Motor neuron (in vitro differentiated cells): ENCODE measurements at regions of chr12 and their contacts with region 1.

Region 1: GRCh38 chr12:49366652-49367380 is 446 bp upstream of the SPATS2 start:
- ATAC-seq: peak; percentile 79 to 93 (median 90)
- H3K4me3 ChIP-seq: peak overlapping the region; percentile 78 to 99 (median 86)
- H3K27ac ChIP-seq: peak overlapping the region; percentile 86 to 90
- H3K4me1 ChIP-seq: peaks cover 0 to 11% of the 10 kb centered on the region in 2 donors

Region 2: DNA sequence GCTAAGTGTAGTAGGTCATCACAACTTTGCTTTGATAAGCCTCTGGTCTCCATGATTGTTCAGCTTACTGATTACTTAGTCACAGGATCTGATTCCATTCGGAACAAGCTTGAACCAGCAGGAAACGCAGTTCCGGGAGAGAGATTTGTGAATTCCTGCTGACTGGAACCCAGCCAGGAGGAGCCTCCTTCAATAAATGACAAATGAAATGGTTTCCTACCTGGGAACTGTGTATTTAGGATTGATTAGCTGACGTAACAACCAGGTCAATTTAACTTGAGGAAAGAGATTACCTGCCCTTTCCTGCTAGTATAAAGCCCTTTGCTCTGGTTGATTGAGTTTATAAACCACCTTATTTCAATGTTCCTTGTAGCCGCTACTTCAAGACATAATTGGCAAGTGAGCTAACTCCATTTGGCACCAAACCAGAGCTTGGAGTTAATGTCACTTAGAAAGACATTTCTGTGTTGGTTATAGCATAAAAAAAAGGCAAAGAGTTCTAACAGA is 136.9 kb after region 1 on chr12:
- in situ Hi-C with region 1: loop called in 5 of 9 experiments (anchors 10 to 25 kb)
- ATAC-seq: no peak
- H3K4me3 ChIP-seq: no peak overlapping the region
- H3K27ac ChIP-seq: no peak overlapping the region
- H3K4me1 ChIP-seq: no peaks in the 10 kb centered on the region

Region 3: DNA sequence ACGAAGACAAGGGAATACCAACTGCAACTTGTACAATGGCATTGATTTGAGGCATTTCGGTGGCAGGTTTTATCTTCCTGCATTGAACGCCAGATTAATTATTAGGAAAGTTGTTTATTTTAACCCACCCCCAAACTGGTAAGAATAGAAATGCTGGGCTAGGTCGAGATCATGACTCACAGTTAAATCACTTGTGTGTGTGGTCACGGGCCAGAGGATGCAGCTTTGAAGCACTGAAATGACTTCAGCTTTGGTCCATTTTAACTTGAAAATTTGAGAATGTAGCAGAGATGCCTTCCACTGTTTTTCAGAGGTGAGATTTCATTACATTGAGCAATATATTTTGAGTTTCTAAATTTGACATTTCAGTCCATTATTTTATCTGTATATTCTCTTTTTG is 148.4 kb after region 1 on chr12:
- in situ Hi-C with region 1: loop called in 5 of 9 experiments (anchors 10 to 25 kb)
- ATAC-seq: peak in 3 of 8 experiments; percentile 43 to 51 (median 48)
- H3K4me3 ChIP-seq: no peak overlapping the region
- H3K27ac ChIP-seq: no peak overlapping the region
- H3K4me1 ChIP-seq: no peaks in the 10 kb centered on the region

Region 4: DNA sequence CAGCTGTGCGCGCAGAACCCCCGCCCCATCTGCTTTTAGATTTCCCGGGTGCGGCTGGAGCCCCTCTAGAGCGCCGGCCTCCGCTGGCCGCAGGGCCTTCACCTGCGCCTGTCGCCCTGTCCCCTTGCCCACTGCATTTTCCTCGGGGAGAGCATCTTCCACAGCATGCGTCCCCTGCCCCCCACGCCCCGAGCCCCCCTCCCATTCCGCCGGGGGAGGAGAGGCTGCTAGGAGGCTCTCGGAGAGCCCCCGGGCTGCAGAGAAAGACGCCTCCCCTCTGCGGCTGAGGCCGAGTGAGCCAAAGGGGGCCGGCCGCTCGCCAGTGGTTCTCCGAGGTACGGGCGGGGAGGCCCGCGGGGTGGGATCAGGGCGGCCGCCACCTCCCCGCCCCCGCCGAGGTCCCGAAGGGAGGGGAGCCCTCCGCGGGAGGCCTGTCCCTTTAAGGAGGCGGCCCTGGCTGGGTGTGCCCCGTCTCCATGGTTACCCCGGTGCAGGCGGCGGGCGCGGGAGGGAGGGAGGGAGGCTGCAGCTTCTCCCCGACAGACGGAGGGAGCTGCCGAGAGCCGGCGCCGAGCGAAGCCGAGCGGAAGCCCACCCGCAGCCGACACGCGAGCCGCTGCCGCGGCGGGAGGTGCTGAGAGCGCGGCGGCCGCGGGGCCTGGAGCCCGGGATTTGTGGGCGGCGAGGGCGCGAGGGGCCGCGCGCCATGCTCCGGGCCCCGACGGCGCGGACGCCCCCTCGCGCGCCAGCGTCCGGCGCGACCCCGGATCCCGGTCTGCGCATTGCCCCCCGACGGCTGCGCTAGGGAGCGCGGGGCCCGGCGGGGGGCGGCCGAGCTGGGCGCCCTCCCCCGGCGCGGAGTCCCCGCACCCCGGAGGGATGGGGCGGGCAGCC is 171.9 kb after region 1 on chr12 and contains the start of gene KCNH3:
- in situ Hi-C with region 1: loop called in 2 of 9 experiments (anchors 25 kb)
- ATAC-seq: peak; percentile 82 to 93 (median 90)
- H3K4me3 ChIP-seq: peak within 1 kb of the TSS; percentile 35 to 42 (median 41)
- H3K27ac ChIP-seq: no peak within 1 kb of the TSS
- H3K4me1 ChIP-seq: peaks cover 9 to 12% of the 10 kb centered on the region in 2 donors
- total RNA-seq, gene KCNH3: 0.10 to 1.6 (median 1.0) TPM